GM13977 (cell line): ENCODE measurements at regions of chr6 and their contacts with region 1.

Region 1: GRCh38 chr6:105733565-105734162 is 330.8 kb upstream of the PREP start:
- DNase-seq: no peak
- CTCF ChIP-seq: peak; percentile 43

Region 2: DNA sequence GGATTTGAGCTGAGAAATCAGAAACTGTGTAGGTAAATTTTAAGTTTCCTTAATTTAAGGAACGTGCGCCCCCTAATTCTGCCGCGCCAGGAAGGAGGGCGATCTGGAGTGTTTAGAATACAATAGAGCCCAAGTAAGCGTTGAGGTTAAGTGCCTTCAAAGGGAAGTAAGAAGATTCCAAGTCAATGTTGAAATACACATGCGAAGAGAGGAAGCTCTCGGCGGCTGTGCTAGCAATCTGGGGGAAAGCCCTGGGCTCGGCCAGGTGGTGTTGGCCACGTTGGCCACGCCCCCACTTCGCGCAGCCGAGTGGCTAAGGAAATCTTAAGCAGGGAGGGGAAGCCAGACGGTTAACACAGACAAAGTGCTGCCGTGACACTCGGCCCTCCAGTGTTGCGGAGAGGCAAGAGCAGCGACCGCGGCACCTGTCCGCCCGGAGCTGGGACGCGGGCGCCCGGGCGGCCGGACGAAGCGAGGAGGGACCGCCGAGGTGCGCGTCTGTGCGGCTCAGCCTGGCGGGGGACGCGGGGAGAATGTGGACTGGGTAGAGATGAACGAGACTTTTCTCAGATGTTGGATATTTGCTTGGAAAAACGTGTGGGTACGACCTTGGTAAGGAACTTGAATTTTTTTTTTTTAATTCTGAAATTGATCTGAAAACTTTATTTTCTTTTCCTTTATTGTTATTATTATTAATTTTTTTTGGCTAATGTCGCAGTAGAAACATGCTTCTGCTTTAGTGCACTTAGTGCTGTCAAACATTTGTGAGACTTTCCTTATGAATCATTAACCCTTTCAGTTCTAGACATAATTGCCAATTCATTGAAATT is 352.5 kb after region 1 on chr6 and contains the start of gene PRDM1:
- in situ Hi-C with region 1: loop called (anchors 25 kb)
- DNase-seq: peak; percentile 80
- CTCF ChIP-seq: peak; percentile 23

Region 3: GRCh38 chr6:106223300-106223930 is 489.8 kb after region 1 on chr6:
- in situ Hi-C with region 1: loop called (anchors 25 kb)
- DNase-seq: peak; percentile 31
- CTCF ChIP-seq: peak; percentile 63

Region 4: DNA sequence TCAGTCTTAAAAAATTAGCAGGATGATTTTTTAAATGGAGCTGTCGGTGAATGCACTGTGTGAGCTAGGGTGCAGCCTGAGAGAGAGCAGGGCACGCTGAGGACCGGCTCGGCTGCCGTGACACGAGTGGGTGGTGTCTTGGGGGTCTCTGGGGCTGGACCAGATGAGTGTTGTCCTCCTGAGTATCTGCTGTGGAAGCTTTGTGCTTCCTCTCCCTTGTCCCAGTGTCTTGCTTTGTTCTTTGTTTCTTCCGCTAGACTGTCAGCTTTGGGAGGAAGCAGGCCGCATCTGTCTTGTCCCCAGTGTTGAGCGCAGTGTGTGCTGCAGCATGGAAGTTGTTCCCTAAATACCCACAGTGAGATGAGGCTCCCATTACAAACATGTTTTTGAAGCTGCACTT is 806.3 kb after region 1 on chr6:
- in situ Hi-C with region 1: no loop called
- DNase-seq: no peak
- CTCF ChIP-seq: no peak